ENCODE measurements at regions of chr10 and their contacts with region 1.

Region 1: DNA sequence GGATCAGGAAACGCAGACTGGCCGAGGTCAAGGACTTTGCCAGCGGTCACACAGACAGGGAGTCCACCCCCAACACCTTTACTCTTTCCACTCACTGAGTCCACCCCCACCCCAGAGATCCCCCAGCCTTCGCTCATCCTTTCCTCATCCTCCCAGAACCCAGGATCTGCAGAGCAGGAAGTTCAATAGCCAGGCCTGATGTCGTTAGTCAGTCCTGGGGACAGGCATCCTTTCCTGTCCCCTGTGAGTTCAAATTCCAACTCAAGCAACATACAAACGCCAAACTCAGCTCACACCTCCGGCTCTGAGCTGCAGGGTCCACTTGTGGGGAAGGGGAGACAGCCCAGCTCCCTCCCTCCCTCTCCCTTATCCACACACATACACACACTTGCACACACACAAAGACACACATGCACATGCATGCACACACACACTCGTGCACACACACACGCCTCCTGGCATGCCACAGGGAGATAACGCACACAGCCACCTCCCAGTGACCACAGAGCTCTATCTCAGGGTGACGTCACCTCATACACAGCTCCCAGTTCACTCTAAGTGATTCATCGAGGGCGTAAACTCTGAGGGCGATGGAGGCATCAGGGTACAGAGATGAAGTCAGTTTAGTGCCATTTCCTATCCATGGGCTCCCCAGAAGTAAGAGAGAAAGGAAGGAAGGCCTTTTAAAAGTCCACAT is 23.9 kb downstream of the CALML3 start:
- DNase-seq: peak; percentile 85
- ATAC-seq: peak; percentile 95
- H3K4me3 Mint-ChIP-seq: no peak overlapping the region
- H3K27ac Mint-ChIP-seq: no peak overlapping the region
- H3K4me1 Mint-ChIP-seq: peaks cover 35% of the 10 kb centered on the region
- H3K27me3 Mint-ChIP-seq: peaks cover 2% of the 10 kb centered on the region

Region 2: DNA sequence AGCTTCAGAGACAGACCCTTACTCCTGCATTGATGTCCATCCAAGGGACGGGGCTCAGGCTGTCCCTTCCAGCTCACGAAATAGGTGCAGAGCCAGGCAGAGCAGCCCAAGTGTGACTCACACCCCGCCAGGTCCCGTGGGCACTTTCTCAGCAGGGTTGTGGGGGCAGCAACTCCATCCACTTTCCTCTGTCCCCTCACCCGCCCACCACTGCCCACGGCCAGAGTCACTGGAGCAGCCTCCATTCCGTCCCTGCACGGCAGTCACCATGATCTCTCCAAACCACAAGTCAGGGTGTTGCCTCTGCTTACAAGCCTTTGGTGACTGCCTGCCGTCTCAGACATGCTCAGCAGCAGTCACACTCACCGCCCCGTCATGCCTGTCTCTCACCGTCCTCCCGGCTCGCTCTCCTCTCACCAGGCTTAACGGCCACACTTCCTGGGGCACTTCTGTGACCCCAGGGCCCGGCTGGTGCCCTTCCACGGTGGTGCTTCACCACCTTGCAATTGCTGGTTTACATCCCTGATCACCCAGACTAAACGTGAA is 15.4 kb after region 1 on chr10:
- CTCF ChIA-PET with region 1: no interaction called
- POLR2A ChIA-PET with region 1: interaction called, 7 read pairs
- intact Hi-C with region 1: loop called (anchors 1 to 2 kb)
- DNase-seq: peak; percentile 80
- ATAC-seq: peak; percentile 86
- H3K4me3 Mint-ChIP-seq: peak overlapping the region; percentile 51
- H3K27ac Mint-ChIP-seq: peak overlapping the region; percentile 86
- H3K4me1 Mint-ChIP-seq: peaks cover 49% of the 10 kb centered on the region
- H3K27me3 Mint-ChIP-seq: no peaks in the 10 kb centered on the region

Region 3: GRCh38 chr10:5860066-5860465 is 311.4 kb after region 1 on chr10:
- CTCF ChIA-PET with region 1: no interaction called
- POLR2A ChIA-PET with region 1: no interaction called
- intact Hi-C with region 1: no loop called
- DNase-seq: no peak
- ATAC-seq: no peak
- H3K4me3 Mint-ChIP-seq: no peak overlapping the region
- H3K27ac Mint-ChIP-seq: no peak overlapping the region
- H3K4me1 Mint-ChIP-seq: no peaks in the 10 kb centered on the region
- H3K27me3 Mint-ChIP-seq: no peaks in the 10 kb centered on the region